ENCODE measurements at regions of chr9 and their contacts with region 1.

Region 1: DNA sequence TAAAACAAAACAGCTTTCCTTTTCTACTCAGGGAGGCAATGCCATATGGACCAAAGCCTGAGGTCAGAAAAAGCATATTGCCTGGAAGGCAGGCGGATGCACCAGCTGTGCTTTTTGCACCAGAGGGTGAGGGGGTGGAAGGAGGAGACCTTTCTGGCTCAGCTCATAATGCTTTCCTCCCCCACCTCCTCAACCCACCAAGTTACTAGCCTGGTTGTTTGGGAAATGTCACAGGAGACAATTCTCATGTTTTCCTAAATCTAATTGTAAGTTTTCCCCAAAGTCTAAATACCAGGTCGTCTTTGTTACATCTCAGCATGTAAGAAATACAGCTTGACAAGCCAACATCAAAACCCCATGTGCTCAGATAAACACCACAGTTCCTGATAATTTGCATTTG is 72.6 kb upstream of the DMRTA1 start:
- DNase-seq: no peak
- CTCF ChIP-seq: no peak

Region 2: DNA sequence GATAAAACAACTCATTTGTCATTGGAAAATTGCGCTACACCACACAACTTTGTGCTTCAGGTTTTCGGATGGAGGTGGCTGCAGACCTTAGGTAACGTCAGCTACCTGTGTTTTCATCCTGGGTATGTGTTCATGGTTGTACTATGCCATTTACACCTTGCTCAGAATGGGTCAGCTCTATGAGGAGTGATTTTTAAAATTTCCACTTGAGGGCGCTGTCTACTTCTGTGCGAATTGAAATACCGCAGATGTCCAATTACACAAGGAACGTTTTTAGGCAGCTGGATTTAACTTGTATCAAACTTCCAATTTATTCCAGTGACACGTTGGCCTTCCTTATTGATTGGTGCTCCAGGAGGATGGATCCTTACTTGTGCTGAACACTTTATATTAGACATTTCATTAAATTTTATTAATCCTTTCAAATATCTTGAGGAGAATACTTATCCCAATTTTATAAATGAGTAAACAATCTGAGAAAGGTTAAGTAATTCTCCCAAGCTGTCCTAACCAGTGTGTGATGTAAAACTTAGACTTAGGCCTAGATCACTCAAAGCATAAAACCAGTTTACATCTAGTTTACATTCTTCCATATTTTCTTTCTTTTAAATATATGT is 96.0 kb after region 1 on chr9:
- in situ Hi-C with region 1: loop called (anchors 25 kb)
- DNase-seq: no peak
- CTCF ChIP-seq: no peak

Region 3: GRCh38 chr9:23036416-23036815 is 662.4 kb after region 1 on chr9:
- in situ Hi-C with region 1: no loop called
- DNase-seq: no peak
- CTCF ChIP-seq: no peak